ENCODE measurements at regions of chr16 and their contacts with region 1.

Region 1: GRCh38 chr16:82229796-82230619 is 60.0 kb upstream of the MPHOSPH6 start:
- DNase-seq: peak; percentile 50 to 73
- ATAC-seq: peak; percentile 89 to 96
- H3K4me3 ChIP-seq: no peak overlapping the region
- H3K27ac ChIP-seq: no peak overlapping the region
- H3K4me1 ChIP-seq: no peaks in the 10 kb centered on the region
- CTCF ChIP-seq: peak; percentile 87
- EP300 ChIP-seq: no peak
- POLR2A ChIP-seq: no peak
- RAD21 ChIP-seq: peak; percentile 85 to 88

Region 2: DNA sequence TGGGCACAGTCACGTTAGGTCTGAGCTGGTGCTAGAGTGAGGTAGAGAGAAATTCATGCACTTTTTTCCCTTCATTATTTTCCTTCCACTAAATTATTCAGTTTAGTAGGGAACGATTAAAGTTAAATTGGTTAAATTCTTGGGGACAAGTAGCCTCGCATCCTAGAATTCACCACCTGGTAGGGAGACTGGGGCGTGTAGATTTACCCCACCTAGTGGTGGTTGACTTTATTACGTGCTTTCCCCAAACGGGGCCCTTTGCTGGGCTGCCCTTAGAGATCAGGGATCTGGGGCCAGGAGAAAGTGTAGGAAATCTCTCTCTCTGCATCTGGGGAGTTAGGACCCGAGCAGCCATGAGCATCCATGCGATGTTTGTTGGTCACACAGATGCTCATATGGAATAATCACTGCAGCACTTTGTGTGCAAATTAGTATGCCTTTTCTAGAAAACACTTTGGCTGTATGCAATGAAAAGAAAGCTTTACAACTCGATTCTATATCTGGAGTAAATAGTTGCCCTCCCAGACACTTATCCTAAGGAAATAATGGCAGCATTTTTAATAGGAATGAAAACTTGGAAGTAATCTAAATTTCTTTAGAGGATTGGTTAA is 343.9 kb before region 1 on chr16:
- CTCF ChIA-PET with region 1: interaction called, 27 read pairs
- POLR2A ChIA-PET with region 1: no interaction called
- DNase-seq: peak; percentile 47 to 85
- ATAC-seq: peak; percentile 91 to 92
- H3K4me3 ChIP-seq: no peak overlapping the region
- H3K27ac ChIP-seq: no peak overlapping the region
- H3K4me1 ChIP-seq: peaks cover 8% of the 10 kb centered on the region; the same call in 1 of the 3 replicates
- CTCF ChIP-seq: peak; percentile 69
- EP300 ChIP-seq: no peak
- POLR2A ChIP-seq: no peak
- RAD21 ChIP-seq: peak; percentile 40 to 53; a peak in 3 of 5 replicates

Region 3: GRCh38 chr16:81901483-81901882 is 328.5 kb before region 1 on chr16:
- CTCF ChIA-PET with region 1: interaction called, 10 read pairs
- POLR2A ChIA-PET with region 1: no interaction called
- DNase-seq: no peak
- ATAC-seq: no peak
- H3K4me3 ChIP-seq: no peak overlapping the region
- H3K27ac ChIP-seq: no peak overlapping the region
- H3K4me1 ChIP-seq: no peaks in the 10 kb centered on the region
- CTCF ChIP-seq: no peak
- EP300 ChIP-seq: no peak
- POLR2A ChIP-seq: no peak
- RAD21 ChIP-seq: no peak

Region 4: GRCh38 chr16:81933361-81933760 is 296.6 kb before region 1 on chr16:
- CTCF ChIA-PET with region 1: interaction called, 94 read pairs
- POLR2A ChIA-PET with region 1: no interaction called
- DNase-seq: no peak
- ATAC-seq: no peak
- H3K4me3 ChIP-seq: no peak overlapping the region
- H3K27ac ChIP-seq: no peak overlapping the region
- H3K4me1 ChIP-seq: no peaks in the 10 kb centered on the region
- CTCF ChIP-seq: no peak
- EP300 ChIP-seq: no peak
- POLR2A ChIP-seq: no peak
- RAD21 ChIP-seq: no peak

Region 5: DNA sequence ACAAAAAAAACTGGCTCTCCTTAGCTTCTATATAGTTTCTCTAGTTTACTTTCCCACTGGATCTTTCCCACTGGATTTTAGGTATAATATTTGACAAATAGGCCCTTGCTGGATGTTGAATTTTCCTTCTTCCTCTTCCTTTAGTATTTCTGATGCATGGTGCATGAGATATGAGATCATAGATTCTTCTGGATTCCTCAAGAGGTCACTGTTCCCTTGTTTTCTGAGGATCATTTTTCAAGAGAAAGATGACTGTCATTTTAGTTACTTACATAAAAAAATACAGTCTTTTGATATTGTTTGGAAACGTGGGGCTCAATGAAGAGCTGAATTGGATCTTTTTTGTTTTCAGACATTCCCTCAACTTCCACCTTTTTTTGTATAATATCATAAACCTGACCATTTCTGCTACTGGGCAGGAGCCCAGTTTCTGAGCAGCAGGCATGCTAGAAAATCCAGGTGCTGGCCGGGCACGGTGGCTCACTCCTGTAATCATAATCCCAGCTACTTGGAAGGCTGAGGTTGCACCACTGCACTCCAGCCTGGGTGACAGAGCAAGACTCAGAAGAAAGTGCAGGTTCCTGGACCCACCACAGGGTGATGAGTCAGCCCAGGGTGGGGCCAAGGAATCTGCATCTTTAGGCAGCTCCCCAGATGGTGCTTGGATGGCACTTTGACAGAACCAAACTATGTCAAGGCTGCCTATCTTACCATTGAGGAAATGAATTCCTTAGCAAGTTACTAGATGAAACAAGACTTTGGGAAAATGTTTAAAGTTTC is 289.0 kb before region 1 on chr16:
- CTCF ChIA-PET with region 1: interaction called, 94 read pairs
- POLR2A ChIA-PET with region 1: no interaction called
- DNase-seq: peak; percentile 57 to 73
- ATAC-seq: peak; percentile 72 to 86
- H3K4me3 ChIP-seq: no peak overlapping the region
- H3K27ac ChIP-seq: no peak overlapping the region
- H3K4me1 ChIP-seq: peaks cover 6% of the 10 kb centered on the region; the same call in 2 of the 3 replicates
- CTCF ChIP-seq: peak; percentile 72
- EP300 ChIP-seq: no peak
- POLR2A ChIP-seq: no peak
- RAD21 ChIP-seq: peak; percentile 78 to 80

Region 6: DNA sequence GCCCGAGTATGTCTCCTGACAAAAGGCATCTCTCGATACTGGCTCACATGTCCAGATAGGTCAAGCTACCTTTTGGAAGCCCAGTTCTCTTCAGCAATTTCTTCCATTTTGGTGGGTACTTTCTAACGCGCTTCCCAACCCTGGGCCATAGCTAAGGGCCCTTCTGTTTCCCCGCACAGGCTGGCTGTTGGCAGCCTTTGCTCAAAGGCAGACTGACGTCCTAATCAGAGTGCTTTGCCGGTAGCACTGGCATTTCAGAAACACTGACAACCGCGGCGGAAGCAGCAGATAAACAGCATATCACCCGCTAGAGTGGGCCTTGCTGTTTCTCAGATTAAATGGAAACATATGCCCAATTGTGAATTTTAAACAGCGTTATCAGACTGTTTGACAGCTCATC is 10.7 kb before region 1 on chr16:
- CTCF ChIA-PET with region 1: interaction called, 10 read pairs
- POLR2A ChIA-PET with region 1: no interaction called
- DNase-seq: no peak
- ATAC-seq: no peak
- H3K4me3 ChIP-seq: no peak overlapping the region
- H3K27ac ChIP-seq: no peak overlapping the region
- H3K4me1 ChIP-seq: no peaks in the 10 kb centered on the region
- CTCF ChIP-seq: no peak
- EP300 ChIP-seq: no peak
- POLR2A ChIP-seq: no peak
- RAD21 ChIP-seq: no peak

Region 7: GRCh38 chr16:82240111-82240510 is 10.1 kb after region 1 on chr16:
- CTCF ChIA-PET with region 1: interaction called, 18 read pairs
- POLR2A ChIA-PET with region 1: no interaction called
- DNase-seq: no peak
- ATAC-seq: no peak
- H3K4me3 ChIP-seq: no peak overlapping the region
- H3K27ac ChIP-seq: no peak overlapping the region
- H3K4me1 ChIP-seq: no peaks in the 10 kb centered on the region
- CTCF ChIP-seq: no peak
- EP300 ChIP-seq: no peak
- POLR2A ChIP-seq: no peak
- RAD21 ChIP-seq: no peak

Region 8: DNA sequence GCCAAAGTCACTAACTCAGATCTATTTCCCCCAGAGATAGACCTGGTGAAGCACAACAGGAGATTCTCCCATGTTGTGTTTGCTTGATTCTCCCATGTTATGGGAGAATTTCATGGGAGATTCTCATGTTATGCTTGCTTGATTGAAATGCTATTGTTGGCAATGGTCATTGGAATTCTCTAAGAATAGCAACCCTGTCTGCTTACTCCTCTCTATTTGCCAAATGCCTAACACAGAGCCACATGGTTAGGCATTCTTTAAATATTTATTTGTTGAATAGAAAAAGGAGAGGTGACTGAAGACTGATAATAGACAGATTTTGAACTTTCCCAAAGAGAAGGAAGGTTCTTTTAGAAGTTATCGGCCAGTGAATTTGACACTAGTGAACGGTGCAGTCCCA is 51.5 kb after region 1 on chr16:
- CTCF ChIA-PET with region 1: no interaction called
- POLR2A ChIA-PET with region 1: no interaction called
- DNase-seq: no peak
- ATAC-seq: no peak
- H3K4me3 ChIP-seq: no peak overlapping the region
- H3K27ac ChIP-seq: no peak overlapping the region
- H3K4me1 ChIP-seq: no peaks in the 10 kb centered on the region
- CTCF ChIP-seq: no peak
- EP300 ChIP-seq: no peak
- POLR2A ChIP-seq: no peak
- RAD21 ChIP-seq: no peak

Region 9: DNA sequence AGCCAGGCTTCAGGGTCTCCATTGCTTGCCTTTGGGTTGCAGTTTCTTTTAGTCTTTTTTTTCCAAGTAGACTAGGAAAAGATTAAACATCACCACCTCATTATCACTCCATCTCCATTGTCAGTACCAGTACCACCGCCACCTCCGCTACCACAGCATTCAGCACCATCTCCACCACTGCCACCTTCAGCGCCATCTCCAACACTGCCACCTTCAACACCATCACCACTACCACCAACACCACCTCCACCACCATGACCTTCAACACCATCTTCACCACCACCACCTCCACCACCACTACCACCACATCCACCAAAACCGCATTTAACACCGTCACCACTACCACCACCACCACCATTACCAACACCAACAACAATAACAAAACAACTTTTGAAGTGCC is 81.5 kb after region 1 on chr16:
- CTCF ChIA-PET with region 1: no interaction called
- POLR2A ChIA-PET with region 1: no interaction called
- DNase-seq: no peak
- ATAC-seq: no peak
- H3K4me3 ChIP-seq: no peak overlapping the region
- H3K27ac ChIP-seq: no peak overlapping the region
- H3K4me1 ChIP-seq: no peaks in the 10 kb centered on the region
- CTCF ChIP-seq: no peak
- EP300 ChIP-seq: no peak
- POLR2A ChIP-seq: no peak
- RAD21 ChIP-seq: no peak

Region 10: DNA sequence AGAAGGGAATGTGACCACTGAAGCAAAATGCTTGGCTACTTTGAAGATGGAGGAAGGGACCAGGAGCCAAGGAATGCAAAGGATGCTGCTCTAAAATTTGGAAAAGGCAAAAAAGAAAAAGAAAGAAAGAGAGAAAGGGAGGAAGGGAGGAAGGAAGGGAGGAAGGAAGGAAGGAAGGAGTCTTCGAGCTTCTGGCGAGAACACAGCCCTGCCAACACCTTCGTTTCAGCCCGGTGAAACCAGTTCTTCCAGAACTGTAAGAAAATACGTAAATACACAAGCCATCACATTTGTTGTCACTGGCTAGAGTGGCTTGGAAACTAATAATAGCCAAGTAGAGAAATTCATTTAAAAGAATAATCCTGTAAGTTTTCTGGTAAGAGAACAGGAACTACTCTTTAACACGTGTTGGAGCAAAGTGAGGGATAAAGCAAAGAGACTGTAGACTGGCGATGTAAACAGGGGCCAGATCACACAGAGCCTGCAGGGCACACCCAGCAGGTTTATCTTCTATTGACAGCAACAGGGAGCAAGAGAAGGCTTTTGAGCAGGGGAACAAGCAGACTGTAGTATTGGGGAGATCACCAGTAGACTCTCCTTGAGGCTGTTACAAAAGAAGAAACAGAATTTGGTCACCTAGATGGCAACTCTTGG is 128.7 kb after region 1 on chr16:
- CTCF ChIA-PET with region 1: no interaction called
- POLR2A ChIA-PET with region 1: no interaction called
- DNase-seq: no peak
- ATAC-seq: no peak
- H3K4me3 ChIP-seq: no peak overlapping the region
- H3K27ac ChIP-seq: no peak overlapping the region
- H3K4me1 ChIP-seq: no peaks in the 10 kb centered on the region
- CTCF ChIP-seq: no peak
- EP300 ChIP-seq: no peak
- POLR2A ChIP-seq: no peak
- RAD21 ChIP-seq: no peak

Region 11: GRCh38 chr16:82535262-82535661 is 305.3 kb after region 1 on chr16:
- CTCF ChIA-PET with region 1: no interaction called
- POLR2A ChIA-PET with region 1: no interaction called
- DNase-seq: no peak
- ATAC-seq: no peak
- H3K4me3 ChIP-seq: no peak overlapping the region
- H3K27ac ChIP-seq: no peak overlapping the region
- H3K4me1 ChIP-seq: no peaks in the 10 kb centered on the region
- CTCF ChIP-seq: no peak
- EP300 ChIP-seq: no peak
- POLR2A ChIP-seq: no peak
- RAD21 ChIP-seq: no peak

Measured in A549 (cell line).